Calu3 (cell line): ENCODE measurements at regions of chr10 and their contacts with region 1.

Region 1: GRCh38 chr10:60032723-60033122 is 126.4 kb upstream of the CCDC6 start:
- DNase-seq: peak; percentile 78
- H3K4me3 Mint-ChIP-seq: no peak overlapping the region
- H3K27ac Mint-ChIP-seq: no peak overlapping the region
- H3K4me1 Mint-ChIP-seq: peaks cover 11% of the 10 kb centered on the region
- H3K27me3 Mint-ChIP-seq: no peaks in the 10 kb centered on the region
- CTCF ChIP-seq: peak; percentile 56

Region 2: GRCh38 chr10:59234816-59235429 is 797.8 kb before region 1 on chr10:
- CTCF ChIA-PET with region 1: no interaction called
- intact Hi-C with region 1: loop called (anchors 10 kb)
- DNase-seq: peak; percentile 54
- H3K4me3 Mint-ChIP-seq: no peak overlapping the region
- H3K27ac Mint-ChIP-seq: no peak overlapping the region
- H3K4me1 Mint-ChIP-seq: no peaks in the 10 kb centered on the region
- H3K27me3 Mint-ChIP-seq: no peaks in the 10 kb centered on the region
- CTCF ChIP-seq: peak; percentile 40

Region 3: GRCh38 chr10:59830601-59831259 is 202.0 kb before region 1 on chr10:
- CTCF ChIA-PET with region 1: no interaction called
- intact Hi-C with region 1: loop called (anchors 1 kb)
- DNase-seq: peak; percentile 66
- H3K4me3 Mint-ChIP-seq: no peak overlapping the region
- H3K27ac Mint-ChIP-seq: no peak overlapping the region
- H3K4me1 Mint-ChIP-seq: peaks cover 15% of the 10 kb centered on the region
- H3K27me3 Mint-ChIP-seq: no peaks in the 10 kb centered on the region
- CTCF ChIP-seq: peak; percentile 85

Region 4: GRCh38 chr10:59906417-59907202 is 126.1 kb before region 1 on chr10 and contains the start of gene CCDC6:
- CTCF ChIA-PET with region 1: interaction called, 4 read pairs
- intact Hi-C with region 1: loop called (anchors 2 kb)
- DNase-seq: peak; percentile 97
- H3K4me3 Mint-ChIP-seq: peak within 1 kb of the TSS; percentile 97
- H3K27ac Mint-ChIP-seq: peak within 1 kb of the TSS; percentile 89
- H3K4me1 Mint-ChIP-seq: peaks cover 58% of the 10 kb centered on the region
- H3K27me3 Mint-ChIP-seq: no peaks in the 10 kb centered on the region
- CTCF ChIP-seq: peak; percentile 88
- total RNA-seq, gene CCDC6: 111 and 115 TPM in 2 replicates

Region 5: GRCh38 chr10:59991661-59992060 is 41.1 kb before region 1 on chr10:
- CTCF ChIA-PET with region 1: no interaction called
- intact Hi-C with region 1: loop called (anchors 2 kb)
- DNase-seq: peak; percentile 91
- H3K4me3 Mint-ChIP-seq: peak overlapping the region; percentile 60
- H3K27ac Mint-ChIP-seq: peak overlapping the region; percentile 99
- H3K4me1 Mint-ChIP-seq: peaks cover 65% of the 10 kb centered on the region
- H3K27me3 Mint-ChIP-seq: no peaks in the 10 kb centered on the region
- CTCF ChIP-seq: no peak

Region 6: DNA sequence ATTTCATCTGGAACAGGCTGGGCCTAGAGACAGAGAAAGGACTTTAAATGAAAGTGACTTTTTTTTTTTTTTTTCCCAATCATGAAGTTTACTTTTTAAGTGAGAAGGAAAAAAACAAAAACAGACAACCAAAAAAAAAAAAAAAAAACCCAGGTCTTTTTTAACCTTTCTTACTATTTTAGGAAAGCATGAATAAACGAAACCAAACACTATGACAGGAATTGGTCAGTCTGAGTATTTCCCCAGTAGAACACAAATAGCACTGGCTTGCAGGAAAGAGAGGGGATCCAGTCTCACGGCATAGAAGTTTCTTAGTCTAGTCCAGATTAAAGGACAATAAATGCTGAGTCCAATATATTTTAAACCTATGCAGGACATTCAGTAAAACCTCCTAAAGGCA is 54.1 kb after region 1 on chr10:
- CTCF ChIA-PET with region 1: no interaction called
- intact Hi-C with region 1: no loop called
- DNase-seq: no peak
- H3K4me3 Mint-ChIP-seq: no peak overlapping the region
- H3K27ac Mint-ChIP-seq: no peak overlapping the region
- H3K4me1 Mint-ChIP-seq: peaks cover 9% of the 10 kb centered on the region
- H3K27me3 Mint-ChIP-seq: no peaks in the 10 kb centered on the region
- CTCF ChIP-seq: no peak